ENCODE measurements at regions of chr20 and their contacts with region 1.

Region 1: DNA sequence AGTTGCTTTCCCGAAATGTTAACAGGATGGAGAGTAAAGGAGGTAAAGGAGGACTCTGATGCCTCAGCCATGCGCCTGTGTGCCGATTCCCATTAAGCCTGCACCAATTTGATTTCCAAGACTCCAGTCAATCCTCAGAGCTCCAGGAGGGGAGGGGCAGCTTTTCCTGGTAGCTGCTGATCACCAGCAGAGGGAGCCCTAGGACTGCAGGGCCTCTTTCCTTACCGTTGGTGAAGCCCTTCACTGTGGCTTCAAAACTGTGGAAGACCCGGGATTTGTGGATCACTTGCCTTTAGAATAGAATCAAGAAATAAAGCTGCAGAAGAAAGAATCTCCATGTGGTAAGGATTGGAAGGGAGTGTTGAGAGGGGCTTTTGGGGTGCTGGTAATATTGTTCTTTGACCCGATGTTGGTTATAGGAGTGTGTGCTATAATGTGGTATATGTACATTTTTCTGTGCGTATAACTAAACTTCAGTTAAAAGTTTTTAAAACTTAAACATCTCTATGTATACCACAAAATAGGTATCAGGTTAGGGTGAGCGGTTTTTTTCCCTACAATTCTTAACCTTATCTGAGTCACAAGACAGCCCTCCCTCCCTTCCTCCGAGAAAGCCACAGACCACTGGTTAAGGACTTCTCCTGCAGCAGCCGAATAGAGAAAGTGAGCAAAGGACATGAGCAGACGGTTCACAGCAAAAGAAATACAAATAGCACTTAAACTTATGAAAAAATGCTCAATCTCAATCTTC is 6.9 kb upstream of the OSER1 start:
- DNase-seq: peak; percentile 37 to 87 (median 72)
- ATAC-seq: peak; percentile 61
- H3K4me3 ChIP-seq: peak overlapping the region; percentile 36 to 47
- H3K4me3 Mint-ChIP-seq: peak overlapping the region; percentile 82
- H3K27ac ChIP-seq: peak overlapping the region; percentile 46 to 63
- H3K27ac Mint-ChIP-seq: peak overlapping the region; percentile 96
- H3K4me1 ChIP-seq: peaks cover 48% of the 10 kb centered on the region
- H3K4me1 Mint-ChIP-seq: peaks cover 70% of the 10 kb centered on the region
- H3K27me3 ChIP-seq: no peaks in the 10 kb centered on the region
- H3K27me3 Mint-ChIP-seq: no peaks in the 10 kb centered on the region
- CTCF ChIP-seq: peak; percentile 94

Region 2: GRCh38 chr20:44228465-44229258 is 11.1 kb after region 1 on chr20:
- CTCF ChIA-PET with region 1: interaction called, 21 read pairs
- POLR2A ChIA-PET with region 1: interaction called, 5 read pairs
- intact Hi-C with region 1: no loop called
- DNase-seq: no peak
- ATAC-seq: no peak
- H3K4me3 ChIP-seq: no peak overlapping the region
- H3K4me3 Mint-ChIP-seq: no peak overlapping the region
- H3K27ac ChIP-seq: no peak overlapping the region
- H3K27ac Mint-ChIP-seq: no peak overlapping the region
- H3K4me1 ChIP-seq: peaks cover 7% of the 10 kb centered on the region
- H3K4me1 Mint-ChIP-seq: peaks cover 7% of the 10 kb centered on the region
- H3K27me3 ChIP-seq: no peaks in the 10 kb centered on the region
- H3K27me3 Mint-ChIP-seq: no peaks in the 10 kb centered on the region
- CTCF ChIP-seq: no peak

Region 3: DNA sequence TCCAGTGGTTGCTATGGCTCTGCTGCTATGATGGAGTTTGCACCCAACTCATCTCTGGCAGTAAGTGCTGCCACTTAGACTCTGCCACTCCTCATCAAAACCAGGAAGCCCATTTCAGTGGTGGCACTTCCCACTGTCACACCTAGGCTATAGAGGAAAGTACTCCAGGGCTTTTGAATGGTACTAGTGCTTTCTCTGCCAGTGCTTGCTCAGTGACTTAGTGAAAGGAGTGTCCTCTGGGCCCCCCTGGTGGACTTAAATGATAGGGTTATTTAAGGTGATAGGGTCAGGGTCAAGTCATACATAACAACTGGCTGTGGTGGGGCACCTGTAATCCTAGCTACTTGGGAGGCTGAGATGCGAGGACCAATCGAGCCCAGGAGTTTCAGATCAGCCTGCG is 70.7 kb after region 1 on chr20:
- CTCF ChIA-PET with region 1: interaction called, 45 read pairs
- POLR2A ChIA-PET with region 1: no interaction called
- intact Hi-C with region 1: loop called (anchors 1 kb)
- DNase-seq: peak in 2 of 9 experiments; percentile 35 to 48
- ATAC-seq: peak; percentile 48
- H3K4me3 ChIP-seq: no peak overlapping the region
- H3K4me3 Mint-ChIP-seq: no peak overlapping the region
- H3K27ac ChIP-seq: no peak overlapping the region
- H3K27ac Mint-ChIP-seq: no peak overlapping the region
- H3K4me1 ChIP-seq: peaks cover 3% of the 10 kb centered on the region
- H3K4me1 Mint-ChIP-seq: no peaks in the 10 kb centered on the region
- H3K27me3 ChIP-seq: no peaks in the 10 kb centered on the region
- H3K27me3 Mint-ChIP-seq: no peaks in the 10 kb centered on the region
- CTCF ChIP-seq: no peak

Region 4: GRCh38 chr20:44326391-44327159 is 109.1 kb after region 1 on chr20:
- CTCF ChIA-PET with region 1: interaction called, 596 read pairs
- POLR2A ChIA-PET with region 1: interaction called, 3 read pairs
- intact Hi-C with region 1: no loop called
- DNase-seq: peak in 4 of 9 experiments; percentile 18 to 59 (median 32)
- ATAC-seq: peak; percentile 67
- H3K4me3 ChIP-seq: peak overlapping the region; percentile 11 to 45
- H3K4me3 Mint-ChIP-seq: peak overlapping the region; percentile 61
- H3K27ac ChIP-seq: no peak overlapping the region
- H3K27ac Mint-ChIP-seq: no peak overlapping the region
- H3K4me1 ChIP-seq: peaks cover 4% of the 10 kb centered on the region
- H3K4me1 Mint-ChIP-seq: peaks cover 2% of the 10 kb centered on the region
- H3K27me3 ChIP-seq: no peaks in the 10 kb centered on the region
- H3K27me3 Mint-ChIP-seq: peaks cover 5% of the 10 kb centered on the region
- CTCF ChIP-seq: no peak

Region 5: DNA sequence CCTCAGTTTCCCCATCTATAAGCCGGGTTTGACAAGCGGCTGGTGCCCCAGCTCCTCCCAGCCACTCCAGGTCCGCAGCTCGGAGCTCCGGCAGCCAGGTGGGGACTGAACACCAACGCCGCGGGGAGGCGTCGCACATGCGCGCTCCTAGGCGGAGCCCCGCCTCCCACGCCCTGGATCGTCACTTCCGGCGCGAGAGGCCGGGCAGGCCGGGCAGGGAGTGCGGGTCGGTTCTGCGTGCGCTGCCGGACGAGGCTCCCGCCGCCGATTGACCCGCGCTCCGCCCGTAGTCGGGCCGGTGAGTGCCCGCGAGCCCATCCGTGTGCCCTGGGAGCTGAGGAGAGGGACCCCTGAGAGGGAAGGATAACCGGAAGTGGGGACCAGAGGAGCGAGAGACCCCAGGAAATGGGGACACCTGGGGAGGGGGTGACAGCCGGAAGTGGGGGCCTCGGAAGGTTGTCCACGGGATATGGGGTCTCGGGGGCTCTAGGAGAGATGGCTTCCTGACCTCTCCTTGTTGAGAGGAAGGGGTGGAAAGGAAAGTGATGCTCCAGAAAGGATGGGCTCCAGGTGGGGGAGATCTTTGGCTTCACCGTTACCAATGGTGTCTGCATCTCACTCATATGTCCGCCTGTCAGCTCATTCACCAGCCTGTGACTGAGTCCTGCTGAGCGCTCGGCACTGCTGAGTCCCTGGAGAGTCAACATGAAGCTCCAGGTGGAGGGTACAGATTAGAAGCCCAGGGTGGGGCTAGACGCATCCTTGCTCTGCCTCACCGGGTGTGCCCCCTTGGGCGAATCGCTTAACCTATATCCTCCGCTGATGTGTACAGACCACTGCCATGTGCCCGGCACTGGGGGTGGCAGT is 258.4 kb after region 1 on chr20 and contains the start of gene TTPAL:
- CTCF ChIA-PET with region 1: interaction called, 3 read pairs
- POLR2A ChIA-PET with region 1: interaction called, 6 read pairs
- intact Hi-C with region 1: loop called in 1 of 2 experiments (anchors 1 kb)
- DNase-seq: peak; percentile 72 to 95 (median 88)
- ATAC-seq: peak; percentile 96
- H3K4me3 ChIP-seq: peak within 1 kb of the TSS; percentile 82 to 90
- H3K4me3 Mint-ChIP-seq: peak within 1 kb of the TSS; percentile 86
- H3K27ac ChIP-seq: peak within 1 kb of the TSS; percentile 94 to 96
- H3K27ac Mint-ChIP-seq: peak within 1 kb of the TSS; percentile 95
- H3K4me1 ChIP-seq: peaks cover 16% of the 10 kb centered on the region
- H3K4me1 Mint-ChIP-seq: peaks cover 27% of the 10 kb centered on the region
- H3K27me3 ChIP-seq: no peaks in the 10 kb centered on the region
- H3K27me3 Mint-ChIP-seq: no peaks in the 10 kb centered on the region
- CTCF ChIP-seq: peak; percentile 26
- total RNA-seq, gene TTPAL: 12.3 TPM

Region 6: GRCh38 chr20:44683263-44684046 is 465.9 kb after region 1 on chr20:
- CTCF ChIA-PET with region 1: interaction called, 28 read pairs
- POLR2A ChIA-PET with region 1: interaction called, 3 read pairs
- intact Hi-C with region 1: loop called (anchors 2 kb)
- DNase-seq: peak in 8 of 9 experiments; percentile 10 to 76 (median 59)
- ATAC-seq: peak; percentile 81
- H3K4me3 ChIP-seq: no peak overlapping the region
- H3K4me3 Mint-ChIP-seq: no peak overlapping the region
- H3K27ac ChIP-seq: no peak overlapping the region
- H3K27ac Mint-ChIP-seq: no peak overlapping the region
- H3K4me1 ChIP-seq: peaks cover 4% of the 10 kb centered on the region
- H3K4me1 Mint-ChIP-seq: peaks cover 9% of the 10 kb centered on the region
- H3K27me3 ChIP-seq: no peaks in the 10 kb centered on the region
- H3K27me3 Mint-ChIP-seq: peaks cover 9% of the 10 kb centered on the region
- CTCF ChIP-seq: peak; percentile 54

Measured in CD8-positive, alpha-beta T cell (primary cell).